B cell (primary cell): ENCODE measurements at regions of chr12 and their contacts with region 1.

Region 1: GRCh38 chr12:121240484-121241101 is 30.7 kb downstream of the P2RX4 start:
- DNase-seq: peak; percentile 85
- ATAC-seq: peak; percentile 94
- H3K4me3 ChIP-seq: peak overlapping the region in 4 of 5 experiments; percentile 19 to 52 (median 33)
- H3K4me3 Mint-ChIP-seq: peak overlapping the region; percentile 83
- H3K27ac ChIP-seq: peak overlapping the region; percentile 62 to 66
- H3K27ac Mint-ChIP-seq: peak overlapping the region; percentile 92
- H3K4me1 ChIP-seq: peaks cover 26 to 31% of the 10 kb centered on the region in 2 donors
- H3K4me1 Mint-ChIP-seq: peaks cover 32% of the 10 kb centered on the region
- H3K27me3 ChIP-seq: no peaks in the 10 kb centered on the region
- H3K27me3 Mint-ChIP-seq: no peaks in the 10 kb centered on the region
- CTCF ChIP-seq: peak; percentile 12

Region 2: DNA sequence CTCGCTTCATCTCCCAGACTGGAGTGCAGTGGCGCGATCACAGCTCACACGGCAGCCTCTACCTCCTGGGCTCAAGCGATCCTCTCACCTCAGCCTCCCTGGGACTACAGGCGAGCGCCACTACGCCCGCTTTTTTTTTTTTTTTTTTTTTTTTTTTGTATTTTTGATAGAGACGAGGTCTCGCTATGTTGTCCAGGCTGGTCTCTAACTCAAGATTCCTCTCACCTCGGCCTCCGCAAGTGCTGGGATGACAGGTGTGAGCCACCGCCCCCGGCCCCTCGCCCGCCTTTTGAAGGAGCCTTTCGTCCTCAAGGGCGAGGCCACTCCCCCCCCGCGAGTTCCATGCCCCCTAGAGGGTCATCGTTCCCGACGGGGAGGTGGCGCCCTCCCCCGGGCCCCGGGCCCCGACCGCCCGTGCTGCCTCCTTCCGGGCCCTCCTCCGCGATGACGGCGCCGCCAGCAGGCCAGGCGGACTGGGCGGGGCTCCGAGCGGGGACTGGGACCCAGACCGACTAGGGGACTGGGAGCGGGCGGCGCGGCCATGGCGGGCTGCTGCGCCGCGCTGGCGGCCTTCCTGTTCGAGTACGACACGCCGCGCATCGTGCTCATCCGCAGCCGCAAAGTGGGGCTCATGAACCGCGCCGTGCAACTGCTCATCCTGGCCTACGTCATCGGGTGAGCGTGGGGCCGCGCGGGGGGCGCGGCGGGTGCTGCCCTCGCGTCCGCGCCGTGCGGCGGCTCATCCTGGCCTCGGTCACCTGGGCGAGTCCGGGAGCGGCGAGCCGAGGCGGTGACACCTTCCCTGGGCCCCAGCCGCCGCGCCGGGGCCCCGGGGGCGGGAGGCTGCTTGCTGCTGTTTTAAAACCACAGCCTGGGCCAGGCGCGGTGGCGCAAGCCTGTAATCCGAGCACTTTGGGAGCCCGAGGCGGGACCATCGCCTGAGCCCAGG is 30.7 kb before region 1 on chr12 and contains the start of gene P2RX4:
- CTCF ChIA-PET with region 1: no interaction called
- POLR2A ChIA-PET with region 1: no interaction called
- intact Hi-C with region 1: loop called (anchors 1 kb)
- DNase-seq: peak; percentile 94
- ATAC-seq: peak; percentile 90
- H3K4me3 ChIP-seq: peak within 1 kb of the TSS in 4 of 5 experiments; percentile 70 to 85 (median 76)
- H3K4me3 Mint-ChIP-seq: peak within 1 kb of the TSS; percentile 88
- H3K27ac ChIP-seq: peak within 1 kb of the TSS; percentile 72 to 89
- H3K27ac Mint-ChIP-seq: peak within 1 kb of the TSS; percentile 88
- H3K4me1 ChIP-seq: peaks cover 4 to 13% of the 10 kb centered on the region in 2 donors
- H3K4me1 Mint-ChIP-seq: peaks cover 14% of the 10 kb centered on the region
- H3K27me3 ChIP-seq: no peaks in the 10 kb centered on the region
- H3K27me3 Mint-ChIP-seq: no peaks in the 10 kb centered on the region
- CTCF ChIP-seq: peak; percentile 36
- total RNA-seq, gene P2RX4: 27.2 and 30.4 TPM in 2 replicates

Region 3: GRCh38 chr12:121296618-121297434 is 56.2 kb after region 1 on chr12 and contains the start of gene CAMKK2:
- CTCF ChIA-PET with region 1: interaction called, 3 read pairs
- POLR2A ChIA-PET with region 1: interaction called, 9 read pairs
- intact Hi-C with region 1: loop called (anchors 2 kb)
- DNase-seq: peak; percentile 94
- ATAC-seq: peak; percentile 87
- H3K4me3 ChIP-seq: peak within 1 kb of the TSS; percentile 70 to 89 (median 85)
- H3K4me3 Mint-ChIP-seq: peak within 1 kb of the TSS; percentile 90
- H3K27ac ChIP-seq: peak within 1 kb of the TSS; percentile 34 to 62
- H3K27ac Mint-ChIP-seq: peak within 1 kb of the TSS; percentile 84
- H3K4me1 ChIP-seq: peaks cover 15 to 30% of the 10 kb centered on the region in 2 donors
- H3K4me1 Mint-ChIP-seq: peaks cover 26% of the 10 kb centered on the region
- H3K27me3 ChIP-seq: no peaks in the 10 kb centered on the region
- H3K27me3 Mint-ChIP-seq: no peaks in the 10 kb centered on the region
- CTCF ChIP-seq: peak; percentile 52
- total RNA-seq, gene CAMKK2: 17.1 and 22.0 TPM in 2 replicates